ENCODE measurements at regions of chr17 and their contacts with region 1.

Region 1: GRCh38 chr17:58303971-58304725 is 23.4 kb upstream of the MPO start:
- DNase-seq: peak; percentile 72
- ATAC-seq: peak; percentile 79
- H3K4me3 Mint-ChIP-seq: no peak overlapping the region
- H3K27ac Mint-ChIP-seq: no peak overlapping the region
- H3K4me1 Mint-ChIP-seq: peaks cover 1% of the 10 kb centered on the region
- H3K27me3 Mint-ChIP-seq: peaks cover 5% of the 10 kb centered on the region

Region 2: DNA sequence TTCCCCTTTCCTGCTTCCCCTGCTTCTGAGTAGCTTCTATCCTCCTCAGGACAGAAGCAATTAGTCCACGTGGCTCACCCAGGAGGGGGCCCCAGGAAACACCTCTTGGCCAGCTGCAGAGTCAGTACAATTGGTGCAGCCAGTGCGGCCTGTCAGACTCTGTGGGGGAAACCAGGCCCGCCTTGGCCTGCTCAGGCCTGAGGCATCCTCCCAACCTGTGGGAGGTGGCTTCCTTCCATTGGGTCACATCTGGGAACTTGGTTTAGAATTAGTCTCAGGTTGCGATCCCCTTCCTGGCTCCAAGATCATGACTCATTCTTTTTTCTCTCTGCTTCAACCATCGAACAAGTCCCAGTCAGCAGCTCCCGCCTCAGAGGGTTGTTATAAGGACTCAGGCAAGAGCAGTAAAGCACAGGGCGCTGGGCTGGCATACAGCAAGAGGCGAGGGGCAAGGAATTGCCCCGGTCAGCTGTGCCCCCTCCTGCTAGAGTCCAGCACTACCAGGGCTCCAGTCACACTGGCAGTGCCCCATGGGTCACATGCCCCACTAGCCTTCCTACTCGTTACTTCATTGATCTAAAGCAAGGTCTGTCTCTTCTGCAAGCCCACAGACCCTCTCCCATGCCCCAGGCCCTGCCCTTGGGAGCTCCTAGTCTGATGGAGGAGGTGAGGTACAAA is 119.7 kb before region 1 on chr17:
- POLR2A ChIA-PET with region 1: no interaction called
- DNase-seq: no peak
- ATAC-seq: no peak
- H3K4me3 Mint-ChIP-seq: no peak overlapping the region
- H3K27ac Mint-ChIP-seq: no peak overlapping the region
- H3K4me1 Mint-ChIP-seq: peaks cover 5% of the 10 kb centered on the region
- H3K27me3 Mint-ChIP-seq: peaks cover 9% of the 10 kb centered on the region

Region 3: DNA sequence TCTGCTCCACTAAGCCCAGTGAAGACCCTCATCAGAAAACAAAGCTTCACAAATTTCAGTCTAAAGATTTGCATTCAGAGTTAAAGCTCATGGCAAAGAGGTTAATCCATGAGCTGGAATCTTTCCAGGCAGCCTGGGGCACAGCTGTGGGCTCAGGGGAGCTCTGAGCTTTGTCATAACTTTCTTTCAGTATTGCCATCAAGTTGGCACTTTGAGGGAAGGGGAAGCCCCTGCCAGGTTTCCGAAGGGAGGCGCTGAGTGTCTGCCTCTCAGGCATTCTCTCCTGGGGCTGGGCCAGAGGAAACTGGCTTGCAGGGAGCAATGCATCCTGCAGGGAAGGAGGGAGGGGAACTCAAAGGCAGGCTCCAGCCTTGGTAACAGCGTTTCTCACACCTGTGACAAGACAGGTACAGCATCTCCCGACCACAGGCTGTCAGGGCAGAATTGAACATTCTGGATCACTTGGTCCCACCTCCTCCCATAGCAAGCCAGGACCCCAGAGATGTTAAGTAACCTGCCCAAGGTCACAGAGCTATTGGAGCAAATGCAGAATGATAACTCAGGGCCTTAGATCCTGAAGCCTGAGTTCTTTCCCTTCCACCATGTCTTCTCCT is 61.9 kb before region 1 on chr17:
- POLR2A ChIA-PET with region 1: no interaction called
- DNase-seq: no peak
- ATAC-seq: no peak
- H3K4me3 Mint-ChIP-seq: no peak overlapping the region
- H3K27ac Mint-ChIP-seq: no peak overlapping the region
- H3K4me1 Mint-ChIP-seq: peaks cover 15% of the 10 kb centered on the region
- H3K27me3 Mint-ChIP-seq: peaks cover 50% of the 10 kb centered on the region

Region 4: DNA sequence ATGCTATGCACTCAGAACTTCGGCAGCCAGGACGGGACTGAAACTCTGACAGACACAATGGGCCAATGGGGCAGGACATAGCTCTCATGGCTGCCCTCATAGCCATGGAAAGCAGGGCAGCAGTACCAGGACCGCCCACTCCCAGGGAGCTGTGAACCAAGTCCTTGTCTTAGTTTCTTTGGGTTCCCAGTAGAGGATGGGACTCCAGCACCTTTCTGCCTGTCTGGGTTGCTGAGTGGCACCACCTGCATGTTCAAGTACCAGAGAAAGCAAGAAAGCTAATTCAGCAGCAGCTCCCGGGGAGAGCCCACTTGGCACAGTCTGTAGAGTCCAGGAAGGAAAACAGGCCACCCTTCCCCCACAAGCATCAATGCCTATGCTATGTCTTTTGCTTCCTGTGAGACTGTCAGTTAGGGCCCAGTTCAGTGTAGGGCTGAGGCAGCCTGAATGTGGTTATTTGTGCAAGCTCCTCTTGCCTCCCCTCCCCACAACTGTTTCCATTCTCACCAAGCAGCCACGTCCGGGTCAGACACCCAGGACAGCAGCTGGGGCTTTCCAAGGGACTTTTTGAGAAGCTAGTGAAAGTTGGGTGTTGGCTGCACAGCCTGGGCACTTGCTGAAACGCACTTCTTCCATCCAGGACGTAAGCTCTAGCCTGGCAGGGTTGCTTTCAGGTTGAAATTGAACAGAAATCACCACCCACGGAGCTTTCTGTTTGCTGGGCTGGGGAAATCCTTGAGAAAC is 40.1 kb after region 1 on chr17:
- POLR2A ChIA-PET with region 1: interaction called, 16 read pairs
- DNase-seq: peak; percentile 78
- ATAC-seq: peak; percentile 76
- H3K4me3 Mint-ChIP-seq: peak overlapping the region; percentile 93
- H3K27ac Mint-ChIP-seq: peak overlapping the region; percentile 97
- H3K4me1 Mint-ChIP-seq: peaks cover 71% of the 10 kb centered on the region
- H3K27me3 Mint-ChIP-seq: no peaks in the 10 kb centered on the region